ENCODE measurements at regions of chr9 and their contacts with region 1.

Region 1: GRCh38 chr9:36008774-36009300 is 27.9 kb upstream of the RECK start:
- DNase-seq: no peak
- H3K4me3 ChIP-seq: no peak overlapping the region
- H3K27me3 ChIP-seq: peaks cover 1% of the 10 kb centered on the region
- CTCF ChIP-seq: peak; percentile 100

Region 2: DNA sequence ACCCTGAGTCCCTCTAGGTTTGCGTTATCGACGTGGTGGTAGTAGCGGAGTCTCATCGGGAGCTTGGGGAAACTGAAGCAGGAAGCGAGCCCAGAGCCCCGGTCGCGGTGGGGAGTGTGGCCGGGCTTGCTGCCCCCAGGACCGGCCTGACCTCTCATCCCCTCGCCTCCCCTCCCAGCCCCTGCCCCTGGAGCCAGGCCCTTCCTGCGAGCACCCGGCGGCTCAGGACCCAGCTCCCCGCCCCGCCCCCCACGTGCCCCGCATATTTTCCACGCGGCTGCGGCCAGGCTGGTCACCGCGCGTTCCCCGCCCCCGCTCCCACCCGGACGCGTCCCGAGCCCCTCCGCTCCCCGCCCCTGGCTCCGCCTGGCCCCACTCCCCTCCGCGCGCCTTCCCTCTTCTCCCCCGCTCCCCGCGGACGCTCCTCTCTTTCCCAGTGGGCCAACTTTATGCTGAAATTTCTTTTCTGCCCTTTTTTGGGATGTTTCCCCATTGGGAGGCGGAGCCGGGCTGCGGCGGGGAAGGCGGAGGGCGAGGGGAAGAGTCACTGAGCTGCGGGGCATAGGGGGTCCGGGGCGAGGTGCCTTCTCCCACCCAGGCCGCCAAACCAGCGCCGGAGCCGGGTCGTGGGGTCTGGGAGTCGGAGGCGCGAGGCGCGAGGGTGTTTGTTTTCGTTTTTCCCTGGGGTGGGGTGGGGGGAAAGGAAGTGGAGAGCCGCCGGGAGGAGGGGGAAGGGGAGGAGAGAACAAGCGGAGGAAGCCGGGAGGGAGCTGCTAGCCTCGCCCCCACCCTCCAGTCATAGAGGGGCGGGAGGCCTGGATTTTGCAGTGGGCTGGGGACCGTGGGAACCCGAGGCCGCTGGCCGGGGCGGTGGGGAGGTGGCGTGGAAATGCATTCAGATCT is 318.2 kb before region 1 on chr9:
- CTCF ChIA-PET with region 1: no interaction called
- POLR2A ChIA-PET with region 1: interaction called, 11 read pairs
- DNase-seq: peak; percentile 26
- H3K4me3 ChIP-seq: peak overlapping the region; percentile 98
- H3K27me3 ChIP-seq: no peaks in the 10 kb centered on the region
- CTCF ChIP-seq: no peak

Region 3: GRCh38 chr9:35954942-35955546 is 53.8 kb before region 1 on chr9:
- CTCF ChIA-PET with region 1: interaction called, 87 read pairs
- POLR2A ChIA-PET with region 1: no interaction called
- DNase-seq: no peak
- H3K4me3 ChIP-seq: no peak overlapping the region
- H3K27me3 ChIP-seq: no peaks in the 10 kb centered on the region
- CTCF ChIP-seq: peak; percentile 88

Region 4: DNA sequence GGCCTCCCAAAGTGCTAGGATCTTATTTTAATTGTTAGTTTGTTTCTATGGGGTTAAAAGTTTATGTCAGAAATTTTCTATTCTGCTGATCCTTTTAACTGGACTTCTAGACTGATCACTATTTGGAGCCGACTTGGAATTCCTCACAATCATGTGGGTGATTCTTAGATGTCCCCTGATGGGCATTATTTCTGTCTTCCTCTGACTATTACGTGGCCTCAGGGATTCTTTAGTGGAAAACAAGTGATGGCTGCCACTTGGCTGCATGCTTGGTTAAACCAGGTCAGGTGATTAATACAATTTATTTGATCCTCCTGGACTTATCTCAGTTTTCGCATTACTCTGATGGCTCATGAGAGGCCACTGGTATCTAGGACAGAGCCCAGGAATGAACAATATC is 18.7 kb before region 1 on chr9:
- CTCF ChIA-PET with region 1: interaction called, 19 read pairs
- POLR2A ChIA-PET with region 1: no interaction called
- DNase-seq: no peak
- H3K4me3 ChIP-seq: no peak overlapping the region
- H3K27me3 ChIP-seq: no peaks in the 10 kb centered on the region
- CTCF ChIP-seq: no peak

Region 5: DNA sequence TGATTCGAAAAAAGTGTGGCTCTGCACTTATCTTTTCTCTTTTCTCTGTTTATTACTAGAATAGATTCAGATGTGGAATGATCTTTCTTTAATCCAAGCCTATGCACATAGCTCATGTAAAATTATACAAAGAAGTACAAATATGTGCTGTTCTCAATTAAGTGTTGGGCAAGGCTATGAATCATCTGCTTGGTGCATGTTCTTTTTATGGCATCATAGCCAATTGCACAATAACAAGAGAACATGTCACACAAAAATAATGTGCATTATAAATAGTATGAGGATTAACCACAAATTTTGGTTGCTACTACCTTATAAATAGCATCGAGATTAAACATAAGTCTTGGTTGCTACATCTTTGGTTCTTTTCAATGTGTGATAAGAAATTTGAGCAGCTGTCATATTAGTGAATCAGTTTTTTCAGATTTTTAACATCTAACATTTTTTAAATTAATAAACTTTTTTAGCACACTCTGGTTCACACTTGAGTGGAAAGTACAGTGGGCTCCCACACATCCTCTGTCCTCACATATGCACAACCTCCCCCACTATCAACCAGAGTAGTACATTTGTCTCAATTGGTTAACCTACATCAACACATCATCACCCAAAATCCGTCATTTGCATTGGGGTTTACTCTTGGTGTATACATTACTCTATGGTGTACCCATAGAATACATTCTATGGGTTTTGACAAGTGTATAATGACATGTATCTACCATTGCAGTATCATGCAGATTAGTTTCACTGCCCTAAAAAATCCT is 21.1 kb after region 1 on chr9:
- CTCF ChIA-PET with region 1: interaction called, 144 read pairs
- POLR2A ChIA-PET with region 1: no interaction called
- DNase-seq: peak; percentile 97
- H3K4me3 ChIP-seq: no peak overlapping the region
- H3K27me3 ChIP-seq: no peaks in the 10 kb centered on the region
- CTCF ChIP-seq: no peak

Region 6: DNA sequence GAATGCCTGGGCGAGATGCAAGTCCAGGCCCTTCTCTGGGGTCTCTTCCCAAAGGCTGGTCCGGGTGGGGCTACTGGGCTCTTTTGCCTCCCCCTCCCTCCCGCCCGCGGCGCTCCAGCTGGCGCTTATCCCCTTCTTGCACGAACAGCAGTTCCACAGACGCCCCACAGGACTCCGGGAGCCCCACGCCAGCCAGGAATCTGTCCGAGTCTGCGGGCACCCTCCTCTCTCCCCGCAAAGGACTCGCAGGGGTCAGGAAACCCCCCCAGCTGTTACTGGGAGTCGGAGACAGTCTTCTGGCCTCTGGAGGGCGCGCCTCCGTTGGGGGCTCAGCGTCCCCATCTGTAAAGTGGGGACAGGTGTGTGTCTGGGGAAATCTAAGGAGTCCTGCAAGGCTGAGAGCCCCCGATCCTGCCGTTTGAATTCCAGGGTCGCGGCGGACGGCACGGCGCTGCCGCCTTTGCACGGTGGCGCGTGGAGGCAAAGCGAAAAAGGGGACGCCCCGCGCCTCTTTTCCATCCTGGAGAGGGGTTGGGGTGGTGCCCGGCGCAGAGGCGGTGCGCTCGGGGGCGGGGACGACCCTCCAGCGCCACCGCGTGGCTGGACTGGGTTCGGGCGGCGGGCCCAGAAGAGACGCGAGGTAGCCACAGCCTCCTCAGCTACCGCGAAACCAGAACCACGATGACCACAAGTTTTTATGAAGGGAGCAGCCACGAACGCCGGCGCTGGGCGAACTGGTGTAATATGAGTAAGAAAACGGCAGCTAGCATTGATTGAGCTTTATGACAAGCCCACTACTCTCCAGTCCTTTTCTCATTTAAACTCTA is 157.5 kb after region 1 on chr9:
- CTCF ChIA-PET with region 1: interaction called, 13 read pairs
- POLR2A ChIA-PET with region 1: no interaction called
- DNase-seq: no peak
- H3K4me3 ChIP-seq: peak overlapping the region; percentile 57
- H3K27me3 ChIP-seq: no peaks in the 10 kb centered on the region
- CTCF ChIP-seq: peak; percentile 80

Region 7: DNA sequence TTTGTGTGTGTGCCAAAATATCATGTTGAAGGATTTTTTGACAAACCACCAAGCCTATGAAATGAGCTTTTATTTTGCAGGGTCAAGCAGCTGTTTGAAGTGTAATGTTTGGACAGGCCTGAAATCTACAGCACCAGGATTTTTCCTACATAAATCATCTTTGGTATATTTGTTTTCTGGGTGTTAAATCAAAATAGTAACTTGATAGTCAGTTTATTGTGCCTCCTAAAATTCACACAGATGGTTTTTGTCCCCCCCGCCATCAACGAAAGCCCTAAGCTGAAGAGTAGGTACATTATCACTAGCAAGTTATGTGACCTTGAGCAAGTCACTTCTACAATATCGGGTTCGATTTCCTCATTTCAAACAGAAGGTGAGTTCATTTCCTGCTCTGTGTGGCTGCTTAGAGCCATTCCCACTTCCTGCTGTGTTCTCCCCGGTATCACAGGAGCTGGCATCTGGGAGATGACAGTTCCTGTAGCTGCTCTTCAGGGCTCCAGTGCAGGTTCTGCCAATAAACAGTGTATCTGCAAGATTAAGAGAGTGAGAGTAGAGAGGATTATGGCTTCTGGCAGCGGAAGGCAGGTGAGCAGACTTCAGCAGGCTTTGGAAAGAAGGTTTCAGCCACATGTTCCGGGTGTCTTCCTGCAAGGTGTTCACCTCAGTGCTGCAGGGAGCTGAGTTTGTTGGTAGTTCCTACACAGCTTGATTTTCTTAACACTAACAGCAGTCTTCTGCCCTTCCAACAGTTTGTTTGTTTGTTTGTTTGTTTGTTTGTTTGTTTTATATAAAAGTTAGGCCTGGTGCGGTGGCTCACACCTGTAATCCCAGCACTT is 297.9 kb after region 1 on chr9:
- CTCF ChIA-PET with region 1: no interaction called
- POLR2A ChIA-PET with region 1: no interaction called
- DNase-seq: no peak
- H3K4me3 ChIP-seq: no peak overlapping the region
- H3K27me3 ChIP-seq: no peaks in the 10 kb centered on the region
- CTCF ChIP-seq: no peak

Measured in BJ (cell line).